Activated CD4-positive, alpha-beta memory T cell treated with anti-CD3 and anti-CD28 coated beads for 36 hours (primary cell): ENCODE measurements at regions of chr9 and their contacts with region 1.

Region 1: GRCh38 chr9:99266255-99267023 is 44.4 kb downstream of the SEC61B start:
- DNase-seq: peak; percentile 78
- H3K4me3 Mint-ChIP-seq: no peak overlapping the region
- H3K27ac Mint-ChIP-seq: no peak overlapping the region
- H3K4me1 Mint-ChIP-seq: peaks cover 22% of the 10 kb centered on the region
- H3K27me3 Mint-ChIP-seq: peaks cover 3% of the 10 kb centered on the region

Region 2: GRCh38 chr9:99173570-99174504 is 92.6 kb before region 1 on chr9:
- CTCF ChIA-PET with region 1: no interaction called
- POLR2A ChIA-PET with region 1: no interaction called
- intact Hi-C with region 1: no loop called
- DNase-seq: no peak
- H3K4me3 Mint-ChIP-seq: no peak overlapping the region
- H3K27ac Mint-ChIP-seq: no peak overlapping the region
- H3K4me1 Mint-ChIP-seq: peaks cover 8% of the 10 kb centered on the region
- H3K27me3 Mint-ChIP-seq: peaks cover 8% of the 10 kb centered on the region

Region 3: GRCh38 chr9:99231711-99232110 is 34.7 kb before region 1 on chr9:
- CTCF ChIA-PET with region 1: interaction called, 12 read pairs
- POLR2A ChIA-PET with region 1: no interaction called
- intact Hi-C with region 1: no loop called
- DNase-seq: peak; percentile 60
- H3K4me3 Mint-ChIP-seq: no peak overlapping the region
- H3K27ac Mint-ChIP-seq: no peak overlapping the region
- H3K4me1 Mint-ChIP-seq: peaks cover 15% of the 10 kb centered on the region
- H3K27me3 Mint-ChIP-seq: no peaks in the 10 kb centered on the region

Region 4: DNA sequence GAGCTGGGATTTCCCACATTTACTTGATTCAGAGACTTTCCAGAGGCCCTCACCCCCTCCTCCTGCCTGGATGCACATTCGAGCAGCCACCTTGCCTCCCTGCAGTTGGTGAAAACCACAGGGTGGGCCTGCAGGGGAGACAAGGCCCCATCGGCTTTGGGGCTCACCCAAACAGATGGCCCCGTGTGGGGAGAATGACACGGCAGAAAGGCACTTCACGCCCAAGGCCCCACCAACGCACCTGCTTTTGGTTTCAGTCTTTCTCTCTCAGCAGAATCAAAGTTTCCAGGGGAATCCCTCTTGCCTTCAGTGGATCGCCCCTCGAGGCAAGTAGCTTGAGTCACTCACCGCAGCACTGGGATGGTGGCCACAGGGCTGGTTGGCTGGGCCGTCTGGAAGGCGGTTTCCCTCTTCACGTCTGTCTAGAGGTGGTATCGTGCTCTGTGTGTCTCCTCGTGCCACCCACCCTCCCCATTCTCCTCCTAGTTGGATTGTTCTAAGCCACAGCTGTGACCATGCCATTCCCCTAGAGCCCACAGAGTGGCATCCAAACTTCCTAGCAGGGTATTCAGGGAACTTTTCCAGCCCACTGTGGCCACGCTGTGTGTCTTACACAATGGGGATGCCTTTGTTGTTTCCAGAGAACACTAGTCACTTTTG is 12.5 kb before region 1 on chr9:
- CTCF ChIA-PET with region 1: no interaction called
- POLR2A ChIA-PET with region 1: interaction called, 5 read pairs
- intact Hi-C with region 1: loop called (anchors 1 kb)
- DNase-seq: peak; percentile 95
- H3K4me3 Mint-ChIP-seq: peak overlapping the region; percentile 46
- H3K27ac Mint-ChIP-seq: peak overlapping the region; percentile 90
- H3K4me1 Mint-ChIP-seq: peaks cover 43% of the 10 kb centered on the region
- H3K27me3 Mint-ChIP-seq: peaks cover 8% of the 10 kb centered on the region

Region 5: DNA sequence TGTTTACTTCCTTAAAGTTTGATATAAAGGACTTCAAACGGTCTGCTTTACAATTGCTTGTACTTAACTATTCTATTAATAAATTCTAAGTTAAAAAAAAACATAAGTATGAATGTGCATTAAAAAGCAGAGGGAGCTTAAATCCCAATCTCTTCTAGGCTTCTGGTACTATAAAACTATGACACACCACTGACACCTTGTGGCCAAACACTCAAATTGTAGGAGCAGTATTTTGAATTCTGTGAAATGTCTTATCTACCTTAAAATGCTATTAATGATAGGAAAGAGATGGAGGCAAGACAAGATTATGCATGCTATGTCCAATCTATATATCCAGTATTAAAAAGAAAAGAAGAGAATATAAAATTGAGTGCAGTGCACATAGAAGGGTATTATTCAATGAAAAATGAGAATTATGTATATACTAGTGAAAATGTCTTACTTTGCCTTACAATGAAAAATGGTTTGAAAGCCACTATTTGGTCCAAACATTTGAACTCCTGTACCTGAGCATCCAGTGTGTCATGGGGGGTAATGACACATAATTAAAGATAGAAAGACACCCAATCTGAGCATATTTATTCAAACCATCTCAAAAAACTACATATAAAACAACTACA is 744.7 kb after region 1 on chr9:
- CTCF ChIA-PET with region 1: interaction called, 4 read pairs
- POLR2A ChIA-PET with region 1: no interaction called
- intact Hi-C with region 1: loop called (anchors 1 kb)
- DNase-seq: peak; percentile 20
- H3K4me3 Mint-ChIP-seq: no peak overlapping the region
- H3K27ac Mint-ChIP-seq: no peak overlapping the region
- H3K4me1 Mint-ChIP-seq: no peaks in the 10 kb centered on the region
- H3K27me3 Mint-ChIP-seq: no peaks in the 10 kb centered on the region

Region 6: DNA sequence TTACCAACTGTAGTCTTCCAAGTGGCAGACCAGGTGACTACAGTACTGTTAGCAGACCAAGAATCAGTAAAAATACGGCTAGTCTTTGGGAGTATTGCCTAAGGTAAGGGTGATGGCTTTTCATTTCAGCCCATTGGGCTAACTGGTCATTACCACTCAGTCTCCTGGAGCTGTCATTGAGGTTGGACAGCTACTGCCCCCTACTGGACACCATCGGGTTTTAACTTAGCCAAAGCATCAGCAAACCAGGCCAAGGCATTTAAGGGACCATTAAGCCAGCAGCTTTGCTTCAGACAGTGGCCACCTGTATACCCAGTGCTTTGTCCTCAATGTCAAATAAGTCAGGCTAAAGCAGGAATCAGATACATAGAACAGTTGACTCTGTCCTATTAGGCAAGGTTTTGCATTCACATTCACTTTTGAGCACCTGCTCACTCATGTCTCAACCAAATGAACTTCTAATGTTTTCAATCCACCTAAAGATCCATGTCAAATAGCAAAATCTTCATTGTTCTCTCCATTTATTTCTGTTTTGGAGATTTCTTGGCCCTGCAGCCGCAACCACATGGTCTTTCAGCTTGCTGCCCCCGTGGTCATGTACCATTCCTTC is 949.8 kb after region 1 on chr9:
- CTCF ChIA-PET with region 1: no interaction called
- POLR2A ChIA-PET with region 1: no interaction called
- intact Hi-C with region 1: loop called (anchors 2 kb)
- DNase-seq: peak; percentile 76
- H3K4me3 Mint-ChIP-seq: no peak overlapping the region
- H3K27ac Mint-ChIP-seq: no peak overlapping the region
- H3K4me1 Mint-ChIP-seq: peaks cover 2% of the 10 kb centered on the region
- H3K27me3 Mint-ChIP-seq: no peaks in the 10 kb centered on the region